IMR-90 (cell line): ENCODE measurements at regions of chr3 and their contacts with region 1.

Region 1: GRCh38 chr3:174755833-174756829 is 103.0 kb upstream of the NAALADL2 start:
- DNase-seq: no peak
- ATAC-seq: no peak
- H3K4me3 ChIP-seq: no peak overlapping the region
- H3K27ac ChIP-seq: no peak overlapping the region
- H3K4me1 ChIP-seq: no peaks in the 10 kb centered on the region
- H3K27me3 ChIP-seq: no peaks in the 10 kb centered on the region
- CTCF ChIP-seq: no peak
- POLR2A ChIP-seq: no peak
- RAD21 ChIP-seq: no peak

Region 2: GRCh38 chr3:174002543-174002942 is 753.6 kb before region 1 on chr3:
- CTCF ChIA-PET with region 1: no interaction called
- POLR2A ChIA-PET with region 1: interaction called, 12 read pairs
- dilution Hi-C with region 1: no loop called
- in situ Hi-C with region 1: no loop called
- intact Hi-C with region 1: no loop called
- DNase-seq: no peak
- ATAC-seq: no peak
- H3K4me3 ChIP-seq: no peak overlapping the region
- H3K27ac ChIP-seq: no peak overlapping the region
- H3K4me1 ChIP-seq: no peaks in the 10 kb centered on the region
- H3K27me3 ChIP-seq: no peaks in the 10 kb centered on the region
- CTCF ChIP-seq: peak; percentile 26; the same call in 1 of the 2 replicates
- POLR2A ChIP-seq: no peak
- RAD21 ChIP-seq: no peak; the same call in 1 of the 2 replicates